Naive thymus-derived CD4-positive, alpha-beta T cell (primary cell): ENCODE measurements at regions of chr12 and their contacts with region 1.

Region 1: DNA sequence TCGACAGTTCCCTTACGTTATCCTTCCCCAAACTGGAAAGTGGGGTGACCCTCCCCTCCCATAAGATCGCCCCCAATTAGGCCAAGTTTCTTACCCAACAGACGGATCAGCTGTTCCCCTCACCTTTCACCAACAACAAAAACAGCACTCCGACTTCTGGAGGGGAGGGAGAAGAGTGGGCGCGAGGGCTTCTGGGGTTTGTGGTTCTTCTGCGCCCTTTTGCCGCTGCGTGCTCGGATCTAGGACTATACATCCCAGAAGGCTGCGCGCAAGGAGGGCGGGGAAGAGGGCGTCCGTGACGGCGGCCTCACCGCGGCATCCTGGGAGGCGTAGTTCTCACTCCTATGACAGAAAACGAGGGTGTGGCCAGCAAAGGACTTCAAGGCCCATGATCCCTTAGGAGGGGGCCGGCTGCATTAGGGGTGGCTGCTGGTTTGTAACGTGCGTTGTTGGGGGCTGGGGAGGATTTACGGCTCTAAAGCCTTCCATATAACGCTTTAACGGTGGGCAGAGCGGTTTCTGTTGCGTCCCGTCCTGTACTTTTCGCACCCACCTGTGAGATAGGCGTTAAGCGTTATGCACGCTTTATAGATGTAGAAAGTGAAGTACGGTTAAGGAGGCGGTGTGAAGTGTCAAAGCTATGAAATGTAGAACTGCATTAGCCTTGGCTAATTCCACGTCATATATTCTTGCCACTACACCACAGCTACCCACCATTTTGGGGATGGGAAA is at the start of gene CALCOCO1:
- DNase-seq: peak; percentile 84 to 98 (median 95)
- ATAC-seq: peak; percentile 98
- H3K4me3 ChIP-seq: peak within 1 kb of the TSS; percentile 94
- H3K4me3 Mint-ChIP-seq: peak within 1 kb of the TSS; percentile 91 to 100 (median 94)
- H3K27ac ChIP-seq: peak within 1 kb of the TSS; percentile 73
- H3K27ac Mint-ChIP-seq: peak within 1 kb of the TSS; percentile 69 to 98 (median 91)
- H3K4me1 ChIP-seq: peaks cover 13 to 17% of the 10 kb centered on the region in 2 donors
- H3K4me1 Mint-ChIP-seq: peaks cover 10 to 41% (median 32%) of the 10 kb centered on the region in 7 donors
- H3K27me3 ChIP-seq: no peaks in the 10 kb centered on the region
- H3K27me3 Mint-ChIP-seq: peaks cover 0 to 13% (median 0%) of the 10 kb centered on the region in 5 donors
- total RNA-seq, gene CALCOCO1: 66.1 to 175 (median 137) TPM

Region 2: GRCh38 chr12:53625946-53626701 is 101.4 kb before region 1 on chr12 and contains the start of gene ATF7:
- CTCF ChIA-PET with region 1: no interaction called
- POLR2A ChIA-PET with region 1: interaction called, 6 read pairs
- intact Hi-C with region 1: loop called (anchors 1 kb)
- DNase-seq: peak; percentile 95 to 100 (median 99)
- ATAC-seq: peak; percentile 97
- H3K4me3 ChIP-seq: peak within 1 kb of the TSS; percentile 92
- H3K4me3 Mint-ChIP-seq: peak within 1 kb of the TSS; percentile 97 to 100 (median 98)
- H3K27ac ChIP-seq: peak within 1 kb of the TSS; percentile 83
- H3K27ac Mint-ChIP-seq: peak within 1 kb of the TSS; percentile 95 to 99 (median 97)
- H3K4me1 ChIP-seq: peaks cover 20 to 32% of the 10 kb centered on the region in 2 donors
- H3K4me1 Mint-ChIP-seq: peaks cover 30 to 55% (median 49%) of the 10 kb centered on the region in 7 donors
- H3K27me3 ChIP-seq: no peaks in the 10 kb centered on the region
- H3K27me3 Mint-ChIP-seq: peaks cover 0 to 6% (median 0%) of the 10 kb centered on the region in 5 donors
- total RNA-seq, gene ATF7: 21.9 to 39.5 (median 30.9) TPM

Region 3: GRCh38 chr12:53696285-53696654 is 31.2 kb before region 1 on chr12:
- CTCF ChIA-PET with region 1: interaction called, 5 read pairs
- POLR2A ChIA-PET with region 1: interaction called, 3 read pairs
- intact Hi-C with region 1: loop called in 1 of 2 experiments (anchors 2 kb)
- DNase-seq: no peak
- ATAC-seq: no peak
- H3K4me3 ChIP-seq: no peak overlapping the region
- H3K4me3 Mint-ChIP-seq: peak overlapping the region; percentile 12 to 88 (median 78)
- H3K27ac ChIP-seq: no peak overlapping the region
- H3K27ac Mint-ChIP-seq: no peak overlapping the region
- H3K4me1 ChIP-seq: peaks cover 7 to 23% of the 10 kb centered on the region in 2 donors
- H3K4me1 Mint-ChIP-seq: peaks cover 26 to 33% (median 30%) of the 10 kb centered on the region in 7 donors
- H3K27me3 ChIP-seq: peaks cover 26 to 30% of the 10 kb centered on the region in 2 donors
- H3K27me3 Mint-ChIP-seq: peaks cover 80 to 91% (median 86%) of the 10 kb centered on the region in 5 donors

Region 4: DNA sequence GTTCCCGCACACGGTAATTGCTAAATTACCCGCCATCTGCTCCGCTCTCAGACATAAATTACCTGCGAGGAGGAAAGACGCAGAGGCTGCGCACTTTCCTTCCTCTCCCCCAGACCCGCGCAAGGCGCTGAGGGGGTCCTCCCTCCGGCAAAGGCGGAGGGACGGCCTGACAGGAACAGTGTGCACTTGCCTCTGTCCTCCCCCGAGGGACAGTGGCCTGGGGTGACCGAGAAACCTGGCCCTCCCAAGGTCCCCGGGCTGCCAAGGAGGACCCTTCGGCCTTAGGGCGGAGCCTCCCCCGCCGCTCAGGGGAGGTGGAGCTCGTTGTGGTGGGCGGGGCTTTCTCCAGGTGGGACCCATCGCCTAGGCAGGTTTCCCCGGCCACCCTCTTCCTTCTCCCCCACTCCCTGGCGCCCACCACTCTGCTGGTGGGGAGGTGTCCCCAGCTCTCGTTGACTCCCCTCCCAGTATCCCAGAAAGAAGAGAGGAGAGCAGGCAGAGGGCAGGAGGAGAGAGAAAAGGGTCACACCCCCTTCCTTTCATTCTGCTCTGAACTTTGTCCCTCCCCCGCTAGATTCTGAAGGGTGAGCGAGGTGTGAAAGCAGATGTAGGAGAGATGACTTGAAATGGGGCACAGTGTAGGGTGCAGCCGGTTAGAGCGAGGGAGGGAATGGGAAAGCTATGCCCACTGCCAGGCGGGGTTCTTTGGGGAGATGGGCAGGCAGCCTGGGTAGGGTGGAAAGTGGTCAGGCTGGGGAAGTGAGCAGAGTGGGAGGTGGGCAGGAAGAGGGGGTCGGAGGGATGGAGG is 11.1 kb after region 1 on chr12:
- CTCF ChIA-PET with region 1: interaction called, 104 read pairs
- POLR2A ChIA-PET with region 1: interaction called, 13 read pairs
- intact Hi-C with region 1: loop called (anchors 1 kb)
- DNase-seq: peak in 5 of 9 donors; percentile 42 to 57 (median 49)
- ATAC-seq: peak; percentile 64
- H3K4me3 ChIP-seq: peak overlapping the region; percentile 65
- H3K4me3 Mint-ChIP-seq: peak overlapping the region in 6 of 10 donors; percentile 57 to 86 (median 84)
- H3K27ac ChIP-seq: no peak overlapping the region
- H3K27ac Mint-ChIP-seq: peak overlapping the region in 3 of 9 donors; percentile 21 to 67 (median 47)
- H3K4me1 ChIP-seq: peaks cover 11 to 19% of the 10 kb centered on the region in 2 donors
- H3K4me1 Mint-ChIP-seq: peaks cover 18 to 27% (median 24%) of the 10 kb centered on the region in 7 donors
- H3K27me3 ChIP-seq: peaks cover 0 to 4% of the 10 kb centered on the region in 2 donors
- H3K27me3 Mint-ChIP-seq: peaks cover 14 to 51% (median 41%) of the 10 kb centered on the region in 5 donors

Region 5: GRCh38 chr12:54324617-54325441 is 597.4 kb after region 1 on chr12 and contains the start of gene COPZ1:
- CTCF ChIA-PET with region 1: no interaction called
- POLR2A ChIA-PET with region 1: no interaction called
- intact Hi-C with region 1: loop called (anchors 1 kb)
- DNase-seq: peak; percentile 69 to 98 (median 94)
- ATAC-seq: peak; percentile 97
- H3K4me3 ChIP-seq: peak within 1 kb of the TSS; percentile 95
- H3K4me3 Mint-ChIP-seq: peak within 1 kb of the TSS; percentile 87 to 100 (median 95)
- H3K27ac ChIP-seq: peak within 1 kb of the TSS; percentile 80
- H3K27ac Mint-ChIP-seq: peak within 1 kb of the TSS; percentile 91 to 99 (median 95)
- H3K4me1 ChIP-seq: peaks cover 4 to 22% of the 10 kb centered on the region in 2 donors
- H3K4me1 Mint-ChIP-seq: peaks cover 8 to 46% (median 42%) of the 10 kb centered on the region in 7 donors
- H3K27me3 ChIP-seq: no peaks in the 10 kb centered on the region
- H3K27me3 Mint-ChIP-seq: no peaks in the 10 kb centered on the region
- total RNA-seq, gene COPZ1: 47.5 to 141 (median 80.0) TPM